K562 (cell line): ENCODE measurements at regions of chr17 and their contacts with region 1.

Region 1: DNA sequence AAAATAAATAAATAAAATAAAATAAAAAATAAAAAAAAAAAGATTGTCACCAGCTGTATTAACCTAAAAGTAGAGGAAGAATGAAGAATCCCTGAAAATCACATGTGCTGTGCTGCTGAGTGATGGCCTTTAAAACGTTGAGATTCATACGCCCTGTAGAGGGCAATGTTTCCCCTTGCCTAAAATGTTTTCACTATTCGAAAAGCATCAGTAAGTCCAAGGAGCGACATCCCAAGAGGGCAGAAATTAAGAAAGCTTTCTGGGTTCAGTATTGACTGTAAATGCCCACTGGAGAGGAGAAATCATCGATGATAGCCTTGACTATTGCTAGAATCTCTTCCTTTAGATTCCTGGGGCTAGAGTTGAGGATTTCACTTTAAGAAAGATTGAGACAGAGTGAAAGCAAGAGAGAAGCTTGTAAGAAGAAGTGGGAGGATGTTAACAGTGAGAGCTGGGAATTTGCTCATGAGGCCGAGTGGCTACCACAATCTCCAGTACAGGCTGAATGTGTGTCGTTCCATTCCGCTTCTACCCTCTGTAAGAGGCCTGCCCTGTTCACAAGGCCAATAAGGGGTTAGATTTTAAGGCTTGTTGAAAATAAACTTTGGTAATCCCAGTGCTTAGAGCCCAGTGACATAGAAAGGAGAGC is 170.8 kb upstream of the FAM20A start:
- DNase-seq: peak; percentile 14 to 58 (median 26)
- ATAC-seq: peak; percentile 74
- H3K4me3 ChIP-seq: no peak overlapping the region
- H3K27ac ChIP-seq: no peak overlapping the region
- H3K4me1 ChIP-seq: no peaks in the 10 kb centered on the region
- H3K27me3 ChIP-seq: no peaks in the 10 kb centered on the region
- CTCF ChIP-seq: peak; percentile 58 to 69 (median 64)
- EP300 ChIP-seq: no peak
- POLR2A ChIP-seq: no peak
- RAD21 ChIP-seq: peak; percentile 43 to 72; a peak in 3 of 4 replicates

Region 2: GRCh38 chr17:69246726-69247375 is 474.9 kb after region 1 on chr17:
- CTCF ChIA-PET with region 1: interaction called, 17 read pairs
- POLR2A ChIA-PET with region 1: no interaction called
- in situ Hi-C with region 1: loop called (anchors 5 kb)
- intact Hi-C with region 1: loop called (anchors 1 kb)
- DNase-seq: peak; percentile 33 to 62 (median 38)
- ATAC-seq: peak; percentile 78
- H3K4me3 ChIP-seq: no peak overlapping the region
- H3K27ac ChIP-seq: no peak overlapping the region
- H3K4me1 ChIP-seq: no peaks in the 10 kb centered on the region; a peak in 1 of 5 replicates
- H3K27me3 ChIP-seq: no peaks in the 10 kb centered on the region
- CTCF ChIP-seq: peak in 2 of 3 experiments; percentile 34 to 76; a peak in 4 of 6 replicates
- EP300 ChIP-seq: no peak
- POLR2A ChIP-seq: no peak
- RAD21 ChIP-seq: peak; percentile 87 to 88

Region 3: GRCh38 chr17:69390795-69391501 is 619.0 kb after region 1 on chr17:
- CTCF ChIA-PET with region 1: interaction called, 4 read pairs
- POLR2A ChIA-PET with region 1: no interaction called
- in situ Hi-C with region 1: loop called (anchors 10 kb)
- intact Hi-C with region 1: loop called (anchors 5 kb)
- DNase-seq: no peak
- ATAC-seq: no peak
- H3K4me3 ChIP-seq: no peak overlapping the region
- H3K27ac ChIP-seq: no peak overlapping the region
- H3K4me1 ChIP-seq: no peaks in the 10 kb centered on the region
- H3K27me3 ChIP-seq: peaks cover 5 to 7% of the 10 kb centered on the region in 2 experiments; a peak in 3 of 5 replicates
- CTCF ChIP-seq: no peak
- EP300 ChIP-seq: no peak
- POLR2A ChIP-seq: no peak
- RAD21 ChIP-seq: no peak

Region 4: DNA sequence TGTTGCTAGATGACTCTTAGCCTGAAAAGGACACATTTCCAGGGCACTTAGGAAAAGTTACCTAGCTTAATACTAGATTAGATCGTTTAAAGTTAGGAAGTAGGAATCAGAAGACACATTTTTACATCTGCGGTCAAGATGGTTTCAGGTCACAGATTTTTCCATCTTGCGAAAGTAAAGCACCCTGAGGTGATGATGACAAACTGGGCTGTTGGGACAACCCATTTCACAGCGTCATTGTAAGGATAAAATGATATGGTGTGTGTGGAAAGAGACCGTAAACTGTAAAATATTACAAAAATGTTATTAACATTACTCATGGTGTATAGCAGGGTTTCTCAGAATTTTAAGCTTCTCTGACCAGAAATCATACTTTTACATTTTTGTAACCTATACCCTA is 632.4 kb after region 1 on chr17:
- CTCF ChIA-PET with region 1: no interaction called
- POLR2A ChIA-PET with region 1: no interaction called
- in situ Hi-C with region 1: loop called (anchors 10 kb)
- intact Hi-C with region 1: loop called (anchors 5 kb)
- DNase-seq: no peak
- ATAC-seq: no peak
- H3K4me3 ChIP-seq: no peak overlapping the region
- H3K27ac ChIP-seq: no peak overlapping the region
- H3K4me1 ChIP-seq: no peaks in the 10 kb centered on the region
- H3K27me3 ChIP-seq: no peaks in the 10 kb centered on the region
- CTCF ChIP-seq: no peak
- EP300 ChIP-seq: no peak
- POLR2A ChIP-seq: no peak
- RAD21 ChIP-seq: no peak

Region 5: GRCh38 chr17:69523244-69523861 is 751.4 kb after region 1 on chr17:
- CTCF ChIA-PET with region 1: interaction called, 3 read pairs
- POLR2A ChIA-PET with region 1: no interaction called
- in situ Hi-C with region 1: loop called (anchors 10 kb)
- intact Hi-C with region 1: no loop called
- DNase-seq: peak; percentile 7 to 24 (median 14)
- ATAC-seq: 0 out of 3 replicates have a peak, but pooled peaks have one; percentile 38
- H3K4me3 ChIP-seq: no peak overlapping the region
- H3K27ac ChIP-seq: no peak overlapping the region
- H3K4me1 ChIP-seq: no peaks in the 10 kb centered on the region
- H3K27me3 ChIP-seq: no peaks in the 10 kb centered on the region
- CTCF ChIP-seq: peak; percentile 26 to 45 (median 44); a peak in 4 of 6 replicates
- EP300 ChIP-seq: no peak
- POLR2A ChIP-seq: no peak
- RAD21 ChIP-seq: peak; percentile 11 to 54; a peak in 3 of 4 replicates